MCF 10A (cell line): ENCODE measurements at regions of chr14 and their contacts with region 1.

Region 1: DNA sequence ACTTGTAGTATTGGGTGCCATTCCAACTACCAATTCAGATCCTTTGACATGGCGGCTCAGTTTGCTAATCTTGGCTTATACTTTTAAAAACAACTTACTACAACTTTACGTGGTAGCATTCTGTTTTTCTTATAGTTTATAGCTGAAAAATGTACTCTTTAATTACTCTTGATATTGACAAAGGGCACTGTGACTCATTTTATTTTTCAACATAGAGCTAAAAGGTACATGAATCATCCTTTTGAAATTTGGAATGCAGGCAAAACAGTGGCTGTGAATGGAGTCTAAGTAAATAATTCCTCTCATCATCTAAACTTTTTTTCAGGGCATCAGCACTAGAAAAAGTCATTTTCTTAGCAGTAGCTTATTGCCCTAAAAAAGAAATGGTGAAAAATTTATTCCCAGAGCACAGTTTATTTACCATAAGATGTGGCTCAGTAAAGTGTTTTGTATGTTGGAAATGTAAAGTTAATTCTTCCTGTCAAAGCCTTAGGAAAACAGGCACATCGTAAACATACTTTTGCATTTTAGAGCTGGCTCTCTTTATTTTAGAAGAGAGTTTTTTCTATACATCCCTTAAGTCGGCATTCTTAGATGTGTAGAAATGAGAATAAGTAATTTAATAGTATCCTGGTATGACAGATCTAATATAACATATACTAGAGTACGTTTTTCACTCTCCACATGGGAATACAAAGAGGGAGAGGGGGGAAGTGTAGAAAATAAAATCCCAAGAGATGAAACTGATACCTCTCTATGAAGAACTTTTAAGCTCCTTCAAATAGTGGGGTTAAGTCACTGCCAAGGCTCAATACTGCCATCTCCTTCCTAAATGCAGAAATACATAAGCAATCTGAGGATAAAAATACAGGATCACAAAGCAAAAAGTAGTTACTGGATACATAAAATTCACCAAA is 55.2 kb downstream of the SLC25A21 start:
- DNase-seq: peak; percentile 83
- H3K4me3 Mint-ChIP-seq: peak overlapping the region; percentile 62
- H3K27ac Mint-ChIP-seq: peak overlapping the region; percentile 98
- H3K4me1 Mint-ChIP-seq: peaks cover 31% of the 10 kb centered on the region
- H3K27me3 Mint-ChIP-seq: no peaks in the 10 kb centered on the region
- CTCF ChIP-seq: peak; percentile 70

Region 2: GRCh38 chr14:36604757-36605505 is 512.3 kb before region 1 on chr14:
- CTCF ChIA-PET with region 1: interaction called, 11 read pairs
- POLR2A ChIA-PET with region 1: no interaction called
- intact Hi-C with region 1: loop called (anchors 1 kb)
- DNase-seq: peak; percentile 90
- H3K4me3 Mint-ChIP-seq: no peak overlapping the region
- H3K27ac Mint-ChIP-seq: no peak overlapping the region
- H3K4me1 Mint-ChIP-seq: peaks cover 12% of the 10 kb centered on the region
- H3K27me3 Mint-ChIP-seq: no peaks in the 10 kb centered on the region
- CTCF ChIP-seq: peak; percentile 63

Region 3: DNA sequence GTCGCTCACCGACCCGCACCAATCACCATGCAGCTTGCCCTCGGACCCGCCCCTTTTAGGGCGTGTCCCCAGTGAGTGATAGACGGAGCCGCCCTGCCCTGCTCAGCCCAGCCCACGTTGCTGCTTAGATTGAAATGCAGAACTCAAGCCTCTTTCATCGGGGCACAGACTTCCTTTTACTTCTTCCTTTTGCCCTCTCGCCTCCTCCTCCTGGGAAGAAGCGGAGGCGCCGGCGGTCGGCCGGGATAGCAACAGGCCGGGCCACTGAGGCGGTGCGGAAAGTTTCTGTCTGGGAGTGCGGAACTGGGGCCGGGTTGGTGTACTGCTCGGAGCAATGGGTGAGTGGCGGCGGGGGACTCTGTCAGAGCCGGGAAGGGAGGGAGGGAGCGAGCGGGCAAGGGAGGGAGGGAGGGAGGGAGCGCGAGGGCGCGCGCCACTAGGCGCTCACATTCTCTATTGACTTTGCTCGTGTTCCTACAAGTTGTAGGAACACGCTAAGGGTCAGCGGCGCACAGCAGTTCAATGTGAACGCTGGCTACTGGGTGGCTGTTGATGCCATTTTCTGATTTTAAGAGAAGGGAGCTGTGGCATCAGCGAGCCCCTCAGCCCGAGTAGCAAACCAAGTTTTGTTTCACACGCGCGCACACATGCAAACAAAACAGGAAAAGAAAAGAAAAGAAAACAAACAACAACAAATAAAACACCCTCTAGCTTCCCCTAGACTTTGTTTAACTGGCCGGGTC is 455.3 kb before region 1 on chr14 and contains the start of gene PAX9:
- CTCF ChIA-PET with region 1: interaction called, 3 read pairs
- POLR2A ChIA-PET with region 1: interaction called, 29 read pairs
- intact Hi-C with region 1: loop called (anchors 1 kb)
- DNase-seq: peak; percentile 96
- H3K4me3 Mint-ChIP-seq: peak within 1 kb of the TSS; percentile 97
- H3K27ac Mint-ChIP-seq: peak within 1 kb of the TSS; percentile 92
- H3K4me1 Mint-ChIP-seq: peaks cover 27% of the 10 kb centered on the region
- H3K27me3 Mint-ChIP-seq: no peaks in the 10 kb centered on the region
- CTCF ChIP-seq: no peak
- total RNA-seq, gene PAX9: 5.5 and 7.3 TPM in 2 replicates

Region 4: GRCh38 chr14:36773136-36773540 is 344.1 kb before region 1 on chr14:
- CTCF ChIA-PET with region 1: interaction called, 5 read pairs
- POLR2A ChIA-PET with region 1: interaction called, 12 read pairs
- intact Hi-C with region 1: loop called (anchors 1 kb)
- DNase-seq: peak; percentile 56
- H3K4me3 Mint-ChIP-seq: no peak overlapping the region
- H3K27ac Mint-ChIP-seq: no peak overlapping the region
- H3K4me1 Mint-ChIP-seq: peaks cover 5% of the 10 kb centered on the region
- H3K27me3 Mint-ChIP-seq: no peaks in the 10 kb centered on the region
- CTCF ChIP-seq: peak; percentile 34

Region 5: GRCh38 chr14:36973806-36974442 is 143.3 kb before region 1 on chr14:
- CTCF ChIA-PET with region 1: interaction called, 8 read pairs
- POLR2A ChIA-PET with region 1: interaction called, 6 read pairs
- intact Hi-C with region 1: loop called (anchors 5 kb)
- DNase-seq: peak; percentile 69
- H3K4me3 Mint-ChIP-seq: no peak overlapping the region
- H3K27ac Mint-ChIP-seq: peak overlapping the region; percentile 90
- H3K4me1 Mint-ChIP-seq: peaks cover 44% of the 10 kb centered on the region
- H3K27me3 Mint-ChIP-seq: no peaks in the 10 kb centered on the region
- CTCF ChIP-seq: no peak

Region 6: DNA sequence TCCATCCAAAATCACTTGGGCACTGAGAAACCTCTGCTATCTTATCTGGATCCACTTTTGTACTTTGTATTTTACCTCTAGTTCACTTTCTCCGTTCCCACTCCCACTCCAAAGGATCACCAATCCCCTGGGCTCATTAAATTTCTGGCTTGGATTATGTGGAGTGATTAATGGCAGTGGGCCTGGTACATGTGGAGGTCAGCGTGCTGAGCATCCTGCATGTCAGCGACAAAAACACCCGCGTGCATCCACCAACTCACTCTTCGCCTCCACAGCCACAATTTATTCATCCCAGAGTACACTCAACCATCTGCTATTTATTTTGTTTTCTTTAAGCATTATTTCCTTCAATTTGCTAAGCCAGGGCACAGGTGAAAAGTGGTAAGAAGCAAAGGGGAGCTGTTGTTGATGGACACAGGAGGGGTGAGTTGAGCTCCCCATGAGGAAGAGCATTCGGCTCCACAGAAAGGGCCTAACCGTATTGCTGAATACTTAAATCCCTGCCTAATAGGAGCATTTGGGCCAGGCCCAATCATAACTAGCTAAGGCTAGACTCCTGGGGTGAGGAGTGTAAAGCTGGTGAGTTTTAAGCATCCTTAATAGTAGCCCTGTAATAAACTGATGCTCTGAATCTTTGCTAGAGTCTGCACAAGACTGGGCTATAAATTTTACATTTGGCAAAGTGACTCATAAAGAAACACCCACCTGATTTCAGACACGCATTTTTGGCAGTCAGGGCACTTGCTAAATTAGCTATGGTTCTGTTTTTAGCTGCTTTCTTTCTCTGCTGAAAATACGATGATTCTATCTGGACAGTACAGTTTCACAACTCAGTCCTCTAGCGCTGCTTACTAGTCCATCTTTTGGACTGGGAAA is 82.5 kb before region 1 on chr14:
- CTCF ChIA-PET with region 1: interaction called, 4 read pairs
- POLR2A ChIA-PET with region 1: interaction called, 10 read pairs
- intact Hi-C with region 1: no loop called
- DNase-seq: peak; percentile 72
- H3K4me3 Mint-ChIP-seq: no peak overlapping the region
- H3K27ac Mint-ChIP-seq: peak overlapping the region; percentile 85
- H3K4me1 Mint-ChIP-seq: peaks cover 20% of the 10 kb centered on the region
- H3K27me3 Mint-ChIP-seq: no peaks in the 10 kb centered on the region
- CTCF ChIP-seq: no peak

Region 7: GRCh38 chr14:37142835-37143401 is 25.7 kb after region 1 on chr14:
- CTCF ChIA-PET with region 1: interaction called, 12 read pairs
- POLR2A ChIA-PET with region 1: interaction called, 10 read pairs
- intact Hi-C with region 1: no loop called
- DNase-seq: peak; percentile 51
- H3K4me3 Mint-ChIP-seq: no peak overlapping the region
- H3K27ac Mint-ChIP-seq: peak overlapping the region; percentile 47
- H3K4me1 Mint-ChIP-seq: peaks cover 19% of the 10 kb centered on the region
- H3K27me3 Mint-ChIP-seq: no peaks in the 10 kb centered on the region
- CTCF ChIP-seq: no peak

Region 8: DNA sequence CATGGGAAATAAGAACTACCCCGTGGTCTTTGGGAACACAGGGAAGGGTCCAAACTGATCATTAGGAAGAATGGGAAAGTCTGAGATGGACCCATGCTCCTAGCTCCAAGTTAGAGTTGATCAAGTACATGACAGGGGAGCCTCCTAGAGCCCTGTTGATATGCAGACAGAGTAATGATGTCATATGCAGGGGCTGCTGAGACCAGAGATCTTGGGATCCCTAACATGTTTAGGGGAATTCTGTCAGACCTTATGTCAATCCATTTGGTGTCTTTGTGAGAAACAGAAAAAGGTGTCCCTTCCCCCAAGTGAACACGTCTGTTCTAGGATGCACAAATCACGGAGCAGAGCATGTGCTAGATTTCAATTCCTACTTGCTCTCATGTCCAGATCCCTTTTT is 48.6 kb after region 1 on chr14:
- CTCF ChIA-PET with region 1: no interaction called
- POLR2A ChIA-PET with region 1: no interaction called
- intact Hi-C with region 1: no loop called
- DNase-seq: no peak
- H3K4me3 Mint-ChIP-seq: no peak overlapping the region
- H3K27ac Mint-ChIP-seq: no peak overlapping the region
- H3K4me1 Mint-ChIP-seq: no peaks in the 10 kb centered on the region
- H3K27me3 Mint-ChIP-seq: no peaks in the 10 kb centered on the region
- CTCF ChIP-seq: no peak

Region 9: DNA sequence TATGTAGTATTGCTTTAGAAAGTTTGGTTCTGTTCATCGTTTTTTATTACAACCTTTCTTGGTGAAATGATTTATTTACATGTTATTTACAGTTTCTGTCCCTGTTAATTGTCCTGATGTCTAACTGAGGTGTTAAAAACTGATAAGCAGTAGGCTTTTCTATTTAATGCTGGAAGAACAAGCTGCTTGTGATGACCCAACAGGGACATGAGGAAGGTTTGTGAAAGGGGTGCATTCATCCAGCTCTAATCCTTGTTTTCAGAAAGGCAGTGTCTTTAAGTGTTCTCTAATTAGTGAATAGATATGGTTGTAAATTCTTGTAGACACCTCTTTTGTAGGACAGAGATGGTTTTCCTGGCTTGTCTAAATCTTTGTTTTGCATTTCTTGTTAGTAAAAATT is 286.4 kb after region 1 on chr14:
- CTCF ChIA-PET with region 1: no interaction called
- POLR2A ChIA-PET with region 1: no interaction called
- intact Hi-C with region 1: no loop called
- DNase-seq: no peak
- H3K4me3 Mint-ChIP-seq: no peak overlapping the region
- H3K27ac Mint-ChIP-seq: no peak overlapping the region
- H3K4me1 Mint-ChIP-seq: peaks cover 5% of the 10 kb centered on the region
- H3K27me3 Mint-ChIP-seq: no peaks in the 10 kb centered on the region
- CTCF ChIP-seq: no peak